HAP-1 (cell line): ENCODE measurements at regions of chr17 and their contacts with region 1.

Region 1: DNA sequence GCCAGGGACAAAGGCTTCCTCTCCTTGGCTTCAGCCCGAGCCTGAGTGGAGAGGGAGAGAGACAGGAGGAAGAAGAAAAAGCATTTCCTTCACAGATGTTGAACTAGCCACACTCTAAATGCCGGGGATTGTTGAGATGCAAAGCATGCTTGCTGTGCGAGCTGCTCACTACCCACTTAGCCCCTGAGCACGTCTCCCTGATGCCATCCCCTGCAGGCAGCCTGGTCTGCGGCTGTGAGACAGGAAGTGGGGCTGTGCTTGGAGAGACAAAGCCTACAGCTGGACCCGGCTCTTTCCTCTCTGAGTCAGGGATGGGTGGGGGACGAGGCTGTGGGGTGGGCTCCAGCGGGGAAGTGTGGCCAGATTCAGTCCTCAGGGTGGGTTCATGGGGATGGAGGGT is 13.7 kb downstream of the WNT9B start:
- DNase-seq: no peak
- H3K4me3 ChIP-seq: no peak overlapping the region
- H3K4me1 ChIP-seq: no peaks in the 10 kb centered on the region
- H3K27me3 ChIP-seq: no peaks in the 10 kb centered on the region

Region 2: DNA sequence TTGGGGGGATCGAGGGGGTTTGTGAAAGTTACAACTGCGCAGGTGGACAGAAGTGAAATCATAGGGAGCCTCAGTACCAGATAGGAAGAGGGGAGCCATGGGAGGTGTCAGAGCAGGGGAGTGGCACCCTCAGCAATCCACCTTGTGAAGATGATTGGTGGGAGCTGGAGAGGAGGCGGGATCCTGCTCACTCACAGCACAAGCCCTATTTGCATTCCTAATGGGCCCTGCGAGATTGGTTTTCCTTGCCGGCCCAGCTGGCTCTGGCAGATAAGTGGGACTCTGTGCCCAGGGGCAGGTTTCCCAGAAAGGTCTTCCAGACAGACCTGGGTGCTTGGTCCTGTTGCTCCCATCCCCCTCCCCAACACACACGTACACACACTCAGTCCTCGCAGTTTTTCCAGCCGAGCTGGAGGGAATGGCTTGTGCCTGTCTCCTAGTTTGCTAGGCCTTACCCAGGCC is 56.0 kb before region 1 on chr17:
- in situ Hi-C with region 1: loop called (anchors 10 kb)
- DNase-seq: peak in 1 of 2 experiments; percentile 21
- H3K4me3 ChIP-seq: no peak overlapping the region
- H3K4me1 ChIP-seq: no peaks in the 10 kb centered on the region
- H3K27me3 ChIP-seq: no peaks in the 10 kb centered on the region

Region 3: GRCh38 chr17:46922804-46923635 is 57.9 kb after region 1 on chr17 and contains the start of gene GOSR2:
- in situ Hi-C with region 1: loop called (anchors 5 kb)
- DNase-seq: peak; percentile 88 to 94
- H3K4me3 ChIP-seq: peak within 1 kb of the TSS; percentile 98
- H3K4me1 ChIP-seq: peaks cover 19% of the 10 kb centered on the region
- H3K27me3 ChIP-seq: no peaks in the 10 kb centered on the region